ENCODE measurements at regions of chr10 and their contacts with region 1.

Region 1: DNA sequence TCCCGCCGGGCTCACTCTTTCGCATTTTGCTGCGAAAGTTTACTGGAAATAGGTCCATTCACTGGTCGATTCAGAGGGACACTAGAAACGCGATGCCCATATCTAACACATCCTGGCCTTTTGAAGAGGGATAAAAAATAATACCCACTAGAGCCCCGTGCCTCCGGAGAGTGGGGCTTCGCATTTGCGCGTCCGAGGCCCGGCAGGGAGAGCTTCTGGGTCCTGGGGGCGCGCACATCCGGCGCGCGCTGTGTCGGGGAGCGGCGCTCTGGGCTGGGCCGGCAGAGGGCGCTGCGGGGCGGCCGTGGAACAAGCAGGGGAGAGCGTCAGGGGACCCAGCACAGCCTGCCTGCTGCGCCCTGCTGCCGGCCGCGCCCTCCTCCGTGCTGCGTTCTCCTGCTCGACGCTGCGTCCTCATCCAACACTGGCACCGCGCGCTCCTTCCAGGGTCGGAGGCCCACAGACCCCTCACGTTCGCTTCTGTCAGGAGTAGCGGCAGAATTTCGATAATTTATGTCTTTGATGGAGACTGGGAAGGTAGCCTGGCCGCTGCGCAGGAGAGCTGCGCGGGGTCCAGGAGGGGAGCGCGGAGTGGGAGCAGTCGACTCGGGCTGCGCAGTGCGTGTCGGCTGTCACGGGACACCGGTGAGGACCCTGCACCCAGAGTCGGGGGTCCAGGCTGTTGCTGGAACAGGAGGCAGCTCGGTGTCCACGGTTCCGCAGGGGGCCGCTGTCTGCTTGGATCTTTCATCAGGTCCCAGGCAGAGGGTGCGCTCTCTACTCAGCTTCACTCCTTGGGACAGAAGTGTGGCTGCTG is 41.5 kb upstream of the ZNF32 start:
- DNase-seq: peak; percentile 90
- H3K4me3 Mint-ChIP-seq: peak overlapping the region; percentile 76
- H3K27ac Mint-ChIP-seq: no peak overlapping the region
- H3K4me1 Mint-ChIP-seq: peaks cover 5% of the 10 kb centered on the region
- H3K27me3 Mint-ChIP-seq: peaks cover 8% of the 10 kb centered on the region

Region 2: DNA sequence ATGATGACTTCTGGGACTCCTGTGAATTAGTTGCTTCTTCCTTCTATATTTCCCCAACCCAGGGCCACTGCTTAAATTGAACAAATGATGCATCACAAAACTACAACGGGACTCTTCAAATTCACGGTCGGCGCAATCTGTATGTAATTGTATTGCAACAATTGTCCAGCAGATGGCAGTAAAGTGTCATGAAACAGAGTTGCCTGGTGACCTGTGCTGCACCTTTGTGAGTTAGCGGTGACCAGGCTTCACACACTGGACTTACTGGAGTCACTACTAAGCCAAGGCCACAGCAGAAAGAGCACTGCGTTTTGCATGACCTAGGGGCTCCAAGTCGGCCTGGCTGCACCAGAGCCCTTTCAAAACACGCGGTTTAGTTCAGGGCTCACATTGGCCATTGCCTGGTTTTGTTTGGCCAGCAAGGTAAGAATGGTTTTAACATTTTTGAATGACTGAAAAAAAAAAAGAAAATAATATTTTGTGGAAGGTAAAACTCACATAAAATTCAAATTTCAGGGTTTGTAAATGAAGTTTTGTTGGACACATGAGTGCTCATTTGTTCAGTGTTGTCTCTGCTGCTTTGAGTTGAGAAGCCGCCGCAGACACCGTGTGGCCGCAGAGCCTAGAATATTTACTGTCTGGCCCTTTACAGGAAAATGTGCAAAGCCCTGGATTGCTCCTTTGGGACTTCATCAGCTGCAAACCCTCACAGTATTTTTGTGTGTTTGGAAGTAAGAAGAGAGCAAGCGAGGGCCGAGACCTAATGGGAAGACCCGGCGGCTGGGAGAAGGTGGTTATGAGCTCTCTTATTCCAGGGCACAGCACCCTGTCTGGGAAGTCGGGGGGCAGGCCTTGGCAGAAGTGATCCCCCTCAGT is 18.3 kb before region 1 on chr10:
- CTCF ChIA-PET with region 1: interaction called, 11 read pairs
- POLR2A ChIA-PET with region 1: no interaction called
- intact Hi-C with region 1: loop called (anchors 2 kb)
- DNase-seq: peak; percentile 42
- H3K4me3 Mint-ChIP-seq: no peak overlapping the region
- H3K27ac Mint-ChIP-seq: no peak overlapping the region
- H3K4me1 Mint-ChIP-seq: peaks cover 3% of the 10 kb centered on the region
- H3K27me3 Mint-ChIP-seq: peaks cover 36% of the 10 kb centered on the region

Region 3: DNA sequence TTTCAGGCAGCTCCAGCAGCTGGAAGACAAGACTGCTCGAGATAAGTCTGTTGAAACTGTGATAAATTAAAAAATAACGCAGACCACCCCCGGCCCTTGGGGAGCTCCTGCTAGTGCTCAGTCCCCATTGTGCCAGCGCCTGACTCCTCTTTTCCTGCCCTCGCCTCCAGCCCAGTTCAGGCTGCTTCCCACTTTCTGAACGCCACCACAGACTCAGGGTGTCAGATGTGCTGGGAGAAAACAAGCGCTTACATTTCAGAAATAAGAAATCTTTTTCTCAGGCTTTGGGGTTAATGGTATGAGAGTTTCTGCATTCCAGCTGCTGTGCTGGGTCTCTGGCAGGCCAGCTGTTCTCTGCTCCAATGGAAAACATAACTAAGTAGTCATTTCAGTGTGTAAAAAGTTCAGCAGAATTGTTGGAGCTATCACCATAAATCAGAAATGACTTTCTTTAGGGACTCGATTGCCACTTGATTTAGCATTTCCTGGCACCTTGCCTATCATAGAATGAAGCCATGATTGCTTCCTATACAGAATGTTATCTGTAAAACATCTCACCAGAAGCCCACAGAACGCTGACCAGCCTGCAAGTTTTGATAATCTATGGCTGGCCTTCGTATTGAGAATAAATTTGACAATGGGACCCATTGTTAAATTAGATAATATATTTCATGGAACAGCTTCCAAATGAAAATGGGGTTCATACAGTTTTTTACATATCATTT is 215.5 kb after region 1 on chr10:
- CTCF ChIA-PET with region 1: interaction called, 3 read pairs
- POLR2A ChIA-PET with region 1: no interaction called
- intact Hi-C with region 1: loop called (anchors 10 kb)
- DNase-seq: no peak
- H3K4me3 Mint-ChIP-seq: no peak overlapping the region
- H3K27ac Mint-ChIP-seq: no peak overlapping the region
- H3K4me1 Mint-ChIP-seq: no peaks in the 10 kb centered on the region
- H3K27me3 Mint-ChIP-seq: no peaks in the 10 kb centered on the region

Region 4: GRCh38 chr10:44310762-44311562 is 620.8 kb after region 1 on chr10:
- CTCF ChIA-PET with region 1: interaction called, 6 read pairs
- POLR2A ChIA-PET with region 1: no interaction called
- intact Hi-C with region 1: loop called (anchors 1 kb)
- DNase-seq: peak; percentile 82
- H3K4me3 Mint-ChIP-seq: no peak overlapping the region
- H3K27ac Mint-ChIP-seq: no peak overlapping the region
- H3K4me1 Mint-ChIP-seq: peaks cover 4% of the 10 kb centered on the region
- H3K27me3 Mint-ChIP-seq: peaks cover 9% of the 10 kb centered on the region

Region 5: GRCh38 chr10:44864637-44865288 is 1174.6 kb after region 1 on chr10:
- CTCF ChIA-PET with region 1: interaction called, 12 read pairs
- POLR2A ChIA-PET with region 1: no interaction called
- intact Hi-C with region 1: no loop called
- DNase-seq: peak; percentile 84
- H3K4me3 Mint-ChIP-seq: peak overlapping the region; percentile 81
- H3K27ac Mint-ChIP-seq: no peak overlapping the region
- H3K4me1 Mint-ChIP-seq: peaks cover 7% of the 10 kb centered on the region
- H3K27me3 Mint-ChIP-seq: peaks cover 36% of the 10 kb centered on the region

Measured in activated CD4-positive, alpha-beta memory T cell treated with anti-CD3 and anti-CD28 coated beads for 36 hours (primary cell).